ENCODE measurements at regions of chr17 and their contacts with region 1.

Region 1: GRCh38 chr17:64968652-64969501 is 49.6 kb upstream of the LRRC37A3 start:
- DNase-seq: peak; percentile 46
- ATAC-seq: peak; percentile 70
- H3K4me3 Mint-ChIP-seq: no peak overlapping the region
- H3K27ac Mint-ChIP-seq: peak overlapping the region; percentile 39
- H3K4me1 Mint-ChIP-seq: peaks cover 72% of the 10 kb centered on the region
- H3K27me3 Mint-ChIP-seq: no peaks in the 10 kb centered on the region

Region 2: DNA sequence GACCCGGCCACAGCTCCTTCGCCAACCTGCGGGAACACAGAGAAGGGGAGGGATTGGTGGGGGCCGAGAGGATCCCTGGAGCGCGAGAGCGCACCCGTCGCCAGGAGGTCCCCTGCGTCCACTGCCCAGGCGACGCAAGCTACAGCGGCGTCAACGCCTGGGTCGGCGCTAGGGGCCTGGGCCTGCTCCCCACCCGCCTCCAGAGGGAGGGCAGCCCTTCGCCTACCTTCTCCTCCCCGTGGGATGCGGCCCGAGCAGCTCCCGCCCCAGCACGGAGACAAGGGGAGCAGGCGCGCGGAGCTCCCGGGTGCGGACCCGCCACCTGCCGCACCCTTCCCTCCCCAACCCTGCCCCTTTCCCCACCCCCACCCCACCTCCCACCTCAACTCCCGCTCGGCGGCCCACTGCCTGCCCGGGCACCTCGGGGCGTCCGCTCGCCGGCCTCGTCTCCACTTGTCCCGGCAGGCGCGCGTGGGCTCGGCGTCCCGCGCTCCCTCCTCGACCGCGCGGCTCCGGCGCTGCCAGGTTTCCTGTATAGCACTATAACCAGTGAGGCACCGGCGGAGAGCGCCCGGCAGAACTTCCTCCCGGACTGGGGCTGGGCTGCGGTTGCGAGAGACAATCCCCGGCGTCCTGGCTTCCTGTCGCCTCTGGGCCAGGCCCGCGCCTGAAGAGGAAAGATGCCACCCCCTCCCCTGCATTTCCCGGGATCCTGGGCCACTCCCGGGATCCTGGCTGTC is 187.7 kb before region 1 on chr17:
- CTCF ChIA-PET with region 1: no interaction called
- POLR2A ChIA-PET with region 1: no interaction called
- intact Hi-C with region 1: loop called in 1 of 2 experiments (anchors 5 kb)
- DNase-seq: peak; percentile 71
- ATAC-seq: peak; percentile 28
- H3K4me3 Mint-ChIP-seq: peak overlapping the region; percentile 64
- H3K27ac Mint-ChIP-seq: no peak overlapping the region
- H3K4me1 Mint-ChIP-seq: peaks cover 34% of the 10 kb centered on the region
- H3K27me3 Mint-ChIP-seq: peaks cover 19% of the 10 kb centered on the region

Region 3: DNA sequence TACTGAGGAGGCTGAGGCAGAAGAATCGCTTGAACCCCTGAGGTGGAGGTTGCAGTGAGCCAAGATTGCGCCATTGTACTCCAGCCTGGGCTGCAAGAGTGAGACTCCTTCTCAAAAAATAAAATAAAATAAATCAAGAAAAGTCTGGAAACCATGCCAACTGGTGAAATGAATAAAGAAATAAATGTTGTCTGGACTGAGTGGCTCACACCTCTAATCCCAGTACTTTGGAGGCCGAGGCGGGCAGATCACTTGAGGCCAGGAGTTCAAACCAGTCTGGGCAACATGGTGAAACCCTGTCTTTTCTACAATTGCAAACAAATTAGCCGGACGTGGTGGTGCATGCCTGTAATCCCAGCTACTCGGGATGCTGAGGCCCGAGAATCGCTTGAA is 48.9 kb before region 1 on chr17:
- CTCF ChIA-PET with region 1: interaction called, 5 read pairs
- POLR2A ChIA-PET with region 1: no interaction called
- intact Hi-C with region 1: loop called in 1 of 2 experiments (anchors 5 kb)
- DNase-seq: no peak
- ATAC-seq: no peak
- H3K4me3 Mint-ChIP-seq: peak overlapping the region; percentile 73
- H3K27ac Mint-ChIP-seq: peak overlapping the region; percentile 70
- H3K4me1 Mint-ChIP-seq: peaks cover 7% of the 10 kb centered on the region
- H3K27me3 Mint-ChIP-seq: no peaks in the 10 kb centered on the region

Region 4: DNA sequence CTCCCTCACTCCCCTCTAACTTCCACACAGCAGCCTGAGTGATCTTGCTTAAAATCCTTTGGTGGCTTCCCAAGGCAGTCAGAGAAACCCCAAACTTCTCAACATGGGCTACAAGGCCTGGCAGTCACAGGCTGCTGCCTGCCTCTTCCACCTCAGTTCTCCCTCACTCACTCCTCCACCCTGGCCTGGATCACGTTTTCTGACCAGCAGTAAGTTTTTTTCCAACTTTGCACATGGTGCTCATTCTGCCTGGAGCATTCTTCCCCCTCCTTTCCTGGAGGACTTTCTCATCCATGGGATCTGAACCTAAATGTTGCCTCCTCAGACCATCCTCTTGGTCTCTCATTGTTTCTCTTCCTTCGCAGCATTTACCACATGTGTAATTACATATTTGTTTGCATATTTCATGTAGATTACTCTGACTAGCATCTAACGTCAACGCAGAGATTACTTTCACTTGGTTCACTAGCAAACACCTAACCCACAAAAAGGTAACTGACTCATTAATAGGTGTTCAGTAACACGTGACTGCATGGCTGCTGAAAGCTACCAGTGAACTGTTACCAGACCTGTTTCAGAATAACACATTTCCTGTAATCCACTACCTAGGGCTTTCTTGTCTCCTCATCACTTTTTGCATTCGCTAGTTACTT is 70.6 kb after region 1 on chr17:
- CTCF ChIA-PET with region 1: no interaction called
- POLR2A ChIA-PET with region 1: no interaction called
- intact Hi-C with region 1: loop called (anchors 1 to 5 kb)
- DNase-seq: peak; percentile 65
- ATAC-seq: peak; percentile 90
- H3K4me3 Mint-ChIP-seq: peak overlapping the region; percentile 54
- H3K27ac Mint-ChIP-seq: peak overlapping the region; percentile 99
- H3K4me1 Mint-ChIP-seq: peaks cover 84% of the 10 kb centered on the region
- H3K27me3 Mint-ChIP-seq: no peaks in the 10 kb centered on the region

Region 5: GRCh38 chr17:65198653-65199382 is 229.9 kb after region 1 on chr17:
- CTCF ChIA-PET with region 1: no interaction called
- POLR2A ChIA-PET with region 1: no interaction called
- intact Hi-C with region 1: loop called in 1 of 2 experiments (anchors 5 kb)
- DNase-seq: no peak
- ATAC-seq: peak; percentile 70
- H3K4me3 Mint-ChIP-seq: no peak overlapping the region
- H3K27ac Mint-ChIP-seq: no peak overlapping the region
- H3K4me1 Mint-ChIP-seq: peaks cover 15% of the 10 kb centered on the region
- H3K27me3 Mint-ChIP-seq: no peaks in the 10 kb centered on the region

Region 6: GRCh38 chr17:65301184-65301583 is 332.3 kb after region 1 on chr17:
- CTCF ChIA-PET with region 1: no interaction called
- POLR2A ChIA-PET with region 1: no interaction called
- intact Hi-C with region 1: no loop called
- DNase-seq: no peak
- ATAC-seq: no peak
- H3K4me3 Mint-ChIP-seq: no peak overlapping the region
- H3K27ac Mint-ChIP-seq: no peak overlapping the region
- H3K4me1 Mint-ChIP-seq: no peaks in the 10 kb centered on the region
- H3K27me3 Mint-ChIP-seq: peaks cover 6% of the 10 kb centered on the region